ENCODE measurements at regions of chr14 and their contacts with region 1.

Region 1: DNA sequence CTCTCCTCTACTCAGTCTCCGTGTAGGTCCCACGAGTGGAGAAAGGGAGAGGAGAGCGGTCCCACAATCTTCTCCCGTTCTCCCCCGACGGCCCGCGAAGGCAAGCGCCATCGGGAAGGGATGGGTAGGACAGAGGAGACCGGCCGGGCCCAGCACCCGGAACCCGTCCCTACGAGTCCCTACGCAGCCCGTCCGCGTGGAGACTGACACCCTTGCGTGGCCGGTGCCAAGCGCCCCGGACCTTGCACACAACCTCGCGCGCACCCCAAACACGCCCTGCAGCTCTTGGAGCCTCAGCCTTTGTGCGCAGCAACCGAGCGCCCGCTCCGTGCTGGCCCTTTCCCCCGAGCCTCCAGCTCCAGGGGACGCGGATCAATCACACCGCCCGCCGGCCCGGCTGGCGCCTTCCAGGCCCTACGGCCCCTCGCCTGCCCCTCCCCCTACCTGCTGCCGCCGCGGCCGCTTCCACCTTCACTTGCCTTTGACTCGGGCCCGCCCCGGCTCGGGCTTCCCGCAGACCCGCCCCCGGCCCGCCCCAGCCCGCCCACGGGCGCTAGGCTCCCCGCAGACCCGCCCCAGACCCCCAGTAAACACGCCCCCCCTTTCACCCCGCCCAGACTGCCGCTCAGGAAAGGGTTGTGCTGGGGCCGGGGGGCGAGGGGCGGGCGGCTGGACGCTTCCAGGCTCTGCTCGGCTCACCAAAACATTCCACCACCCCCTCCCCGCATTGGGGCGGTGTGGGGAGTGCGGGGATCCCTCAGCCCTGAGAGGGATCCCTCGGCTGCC is at the start of gene NDRG2:
- DNase-seq: no peak
- H3K4me3 ChIP-seq: peak within 1 kb of the TSS; percentile 36
- H3K27me3 ChIP-seq: peaks cover 42% of the 10 kb centered on the region
- CTCF ChIP-seq: no peak
- polyA plus RNA-seq, gene NDRG2: 0.83 and 1.1 TPM in 2 replicates

Region 2: GRCh38 chr14:21039585-21040369 is 15.0 kb after region 1 on chr14:
- CTCF ChIA-PET with region 1: interaction called, 202 read pairs
- POLR2A ChIA-PET with region 1: no interaction called
- DNase-seq: no peak
- H3K4me3 ChIP-seq: no peak overlapping the region
- H3K27me3 ChIP-seq: peaks cover 6% of the 10 kb centered on the region
- CTCF ChIP-seq: peak; percentile 59

Measured in BJ (cell line).